ENCODE measurements at regions of chr2 and their contacts with region 1.

Region 1: GRCh38 chr2:86383844-86384243 is 46.4 kb upstream of the REEP1 start:
- DNase-seq: no peak
- ATAC-seq: no peak
- H3K4me3 ChIP-seq: no peak overlapping the region
- H3K27ac ChIP-seq: no peak overlapping the region
- H3K4me1 ChIP-seq: no peaks in the 10 kb centered on the region
- H3K27me3 ChIP-seq: peaks cover 0 to 12% of the 10 kb centered on the region in 2 experiments; a peak in 3 of 5 replicates
- CTCF ChIP-seq: no peak
- EP300 ChIP-seq: no peak
- POLR2A ChIP-seq: no peak
- RAD21 ChIP-seq: no peak

Region 2: DNA sequence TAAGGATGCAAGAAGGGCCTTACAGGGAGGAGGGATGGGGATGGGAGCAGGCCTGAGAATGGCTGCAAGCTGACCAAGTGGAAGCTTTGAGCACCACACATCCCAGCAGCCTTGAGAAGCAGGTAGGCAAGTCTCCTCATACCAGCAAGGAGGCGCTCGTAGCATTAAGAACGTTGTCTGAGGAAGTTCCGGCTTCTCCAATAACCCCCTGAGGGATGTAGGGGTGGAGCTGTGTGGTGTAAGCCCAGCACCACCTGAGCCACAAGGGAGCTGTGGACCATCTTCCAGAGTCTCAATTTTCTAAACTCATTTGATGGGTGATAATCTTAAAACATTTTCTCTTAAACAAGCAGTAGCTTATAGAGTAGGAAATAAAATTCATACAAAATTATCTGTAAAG is 545.7 kb before region 1 on chr2:
- CTCF ChIA-PET with region 1: no interaction called
- POLR2A ChIA-PET with region 1: no interaction called
- in situ Hi-C with region 1: no loop called
- intact Hi-C with region 1: loop called (anchors 5 kb)
- DNase-seq: peak in 2 of 4 experiments; percentile 26 to 44
- ATAC-seq: peak; percentile 87
- H3K4me3 ChIP-seq: no peak overlapping the region
- H3K27ac ChIP-seq: no peak overlapping the region
- H3K4me1 ChIP-seq: peaks cover 3 to 9% of the 10 kb centered on the region in 2 experiments; a peak in 3 of 5 replicates
- H3K27me3 ChIP-seq: no peaks in the 10 kb centered on the region
- CTCF ChIP-seq: peak; percentile 24 to 47 (median 46); a peak in 5 of 6 replicates
- EP300 ChIP-seq: no peak
- POLR2A ChIP-seq: no peak
- RAD21 ChIP-seq: peak in 1 of 2 experiments; percentile 52; a peak in 2 of 4 replicates

Region 3: DNA sequence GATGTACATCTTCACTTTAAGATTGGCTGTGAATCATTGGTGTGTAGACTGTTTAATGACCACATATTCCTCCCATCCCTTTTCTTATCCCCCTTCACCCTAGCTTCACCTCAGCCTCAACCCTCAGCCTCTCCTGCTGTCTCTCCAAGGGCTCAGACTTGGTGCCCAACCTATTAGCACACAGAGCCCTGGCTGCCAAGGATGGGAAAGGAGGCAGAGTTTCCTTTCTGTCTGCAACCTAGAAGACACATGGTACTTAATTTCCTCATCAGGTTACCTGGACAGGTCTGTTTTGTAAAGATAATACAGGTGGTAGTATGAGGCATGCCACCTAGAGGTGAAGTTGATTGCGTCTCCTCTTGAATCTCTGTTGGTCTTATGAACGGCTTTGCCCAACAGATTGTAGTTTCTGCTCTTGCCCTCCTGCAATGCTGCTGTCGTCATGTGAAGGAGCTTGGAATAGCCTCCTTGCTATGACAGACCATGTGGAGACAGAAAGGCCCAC is 291.7 kb after region 1 on chr2:
- CTCF ChIA-PET with region 1: no interaction called
- POLR2A ChIA-PET with region 1: no interaction called
- in situ Hi-C with region 1: no loop called
- intact Hi-C with region 1: no loop called
- DNase-seq: no peak
- ATAC-seq: no peak
- H3K4me3 ChIP-seq: no peak overlapping the region
- H3K27ac ChIP-seq: no peak overlapping the region
- H3K4me1 ChIP-seq: no peaks in the 10 kb centered on the region
- H3K27me3 ChIP-seq: peaks cover 0 to 3% of the 10 kb centered on the region in 2 experiments; a peak in 3 of 5 replicates
- CTCF ChIP-seq: 0 out of 6 replicates have a peak, but pooled peaks of 1 of the 3 experiments have one; percentile 17
- EP300 ChIP-seq: no peak
- POLR2A ChIP-seq: no peak
- RAD21 ChIP-seq: no peak